GM10248 (cell line): ENCODE measurements at regions of chr5 and their contacts with region 1.

Region 1: GRCh38 chr5:149551200-149552037 is at the start of gene CSNK1A1:
- DNase-seq: peak; percentile 100
- CTCF ChIP-seq: peak; percentile 69

Region 2: GRCh38 chr5:149526845-149527580 is 24.4 kb before region 1 on chr5:
- CTCF ChIA-PET with region 1: interaction called, 13 read pairs
- POLR2A ChIA-PET with region 1: no interaction called
- DNase-seq: no peak
- CTCF ChIP-seq: no peak

Region 3: DNA sequence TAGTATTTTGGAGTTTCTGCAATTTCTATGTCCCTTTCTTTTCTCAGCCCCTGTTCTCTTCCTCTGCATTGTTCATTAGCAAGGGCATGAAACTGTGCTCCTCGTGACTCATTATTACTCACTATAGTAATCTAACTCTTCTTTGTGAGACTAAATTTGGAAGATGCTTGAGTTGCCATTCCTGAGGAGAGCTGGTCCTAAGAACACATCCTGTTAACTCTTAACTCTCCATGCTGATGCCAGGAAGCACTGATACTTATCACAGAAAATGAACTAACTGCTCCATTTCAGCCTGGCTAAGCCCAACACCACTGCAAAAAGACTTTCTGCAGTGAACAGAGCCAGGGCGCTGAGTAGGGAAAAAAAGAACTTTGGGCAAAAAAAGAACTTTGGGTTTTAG is 10.4 kb after region 1 on chr5:
- CTCF ChIA-PET with region 1: interaction called, 11 read pairs
- POLR2A ChIA-PET with region 1: interaction called, 3 read pairs
- DNase-seq: no peak
- CTCF ChIP-seq: no peak